K562 (cell line): ENCODE measurements at regions of chr2 and their contacts with region 1.

Region 1: GRCh38 chr2:206392118-206392517 is 51.2 kb upstream of the ADAM23 start:
- DNase-seq: peak; percentile 21 to 53 (median 24)
- ATAC-seq: peak; percentile 78
- H3K4me3 ChIP-seq: no peak overlapping the region
- H3K27ac ChIP-seq: no peak overlapping the region
- H3K4me1 ChIP-seq: no peaks in the 10 kb centered on the region
- H3K27me3 ChIP-seq: no peaks in the 10 kb centered on the region
- CTCF ChIP-seq: peak; percentile 45 to 63 (median 51); a peak in 5 of 6 replicates
- EP300 ChIP-seq: no peak
- POLR2A ChIP-seq: no peak
- RAD21 ChIP-seq: peak in 1 of 2 experiments; percentile 56; a peak in 2 of 4 replicates

Region 2: GRCh38 chr2:206260188-206261012 is 131.7 kb before region 1 on chr2:
- CTCF ChIA-PET with region 1: no interaction called
- POLR2A ChIA-PET with region 1: no interaction called
- in situ Hi-C with region 1: no loop called
- intact Hi-C with region 1: no loop called
- DNase-seq: peak in 3 of 4 experiments; percentile 6 to 14 (median 9)
- ATAC-seq: peak; percentile 84
- H3K4me3 ChIP-seq: no peak overlapping the region
- H3K27ac ChIP-seq: no peak overlapping the region
- H3K4me1 ChIP-seq: no peaks in the 10 kb centered on the region
- H3K27me3 ChIP-seq: peaks cover 12 to 42% of the 10 kb centered on the region in 2 experiments; a peak in 4 of 5 replicates
- CTCF ChIP-seq: peak; percentile 8 to 34 (median 18); a peak in 3 of 6 replicates
- EP300 ChIP-seq: no peak
- POLR2A ChIP-seq: no peak
- RAD21 ChIP-seq: peak; percentile 10 to 33; a peak in 1 of 4 replicates

Region 3: DNA sequence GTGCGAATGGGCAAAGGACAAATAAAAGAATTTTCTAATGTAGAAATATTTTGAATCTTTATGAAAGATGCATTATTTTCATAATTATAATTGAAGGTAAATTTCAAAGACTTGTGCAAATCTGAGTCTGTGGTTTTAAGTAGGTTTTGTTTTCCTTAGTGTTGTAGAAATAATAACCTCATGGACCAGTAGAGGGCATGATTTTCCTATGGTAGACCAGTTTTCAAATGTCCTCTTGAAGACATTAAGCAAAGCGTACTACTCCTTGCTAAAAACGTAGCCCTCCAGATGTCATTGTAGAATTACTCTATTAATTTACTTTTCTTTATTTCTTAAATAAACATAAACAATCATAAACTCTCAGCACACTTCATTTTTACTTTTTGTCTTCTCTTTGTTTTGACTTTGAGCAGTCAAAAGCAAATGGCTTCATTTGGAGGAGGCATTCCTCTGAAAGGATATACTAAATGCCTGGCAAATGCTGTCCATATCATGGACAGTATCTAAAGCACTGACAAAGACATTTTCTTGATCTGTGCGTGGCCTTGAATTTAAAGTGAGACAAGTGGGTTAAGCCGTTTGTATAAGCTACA is 164.3 kb after region 1 on chr2:
- CTCF ChIA-PET with region 1: no interaction called
- POLR2A ChIA-PET with region 1: no interaction called
- in situ Hi-C with region 1: no loop called
- intact Hi-C with region 1: loop called (anchors 5 kb)
- DNase-seq: peak; percentile 12 to 33 (median 18)
- ATAC-seq: peak; percentile 71
- H3K4me3 ChIP-seq: no peak overlapping the region
- H3K27ac ChIP-seq: no peak overlapping the region
- H3K4me1 ChIP-seq: no peaks in the 10 kb centered on the region
- H3K27me3 ChIP-seq: no peaks in the 10 kb centered on the region
- CTCF ChIP-seq: peak; percentile 29 to 59 (median 31); a peak in 3 of 6 replicates
- EP300 ChIP-seq: no peak
- POLR2A ChIP-seq: no peak
- RAD21 ChIP-seq: peak in 1 of 2 experiments; percentile 50; a peak in 3 of 4 replicates

Region 4: GRCh38 chr2:206693399-206694137 is 301.4 kb after region 1 on chr2:
- CTCF ChIA-PET with region 1: no interaction called
- POLR2A ChIA-PET with region 1: no interaction called
- in situ Hi-C with region 1: no loop called
- intact Hi-C with region 1: loop called (anchors 10 kb)
- DNase-seq: peak; percentile 25 to 59 (median 30)
- ATAC-seq: peak; percentile 81
- H3K4me3 ChIP-seq: no peak overlapping the region
- H3K27ac ChIP-seq: no peak overlapping the region
- H3K4me1 ChIP-seq: no peaks in the 10 kb centered on the region
- H3K27me3 ChIP-seq: no peaks in the 10 kb centered on the region; a peak in 1 of 5 replicates
- CTCF ChIP-seq: peak; percentile 37 to 60 (median 51); a peak in 5 of 6 replicates
- EP300 ChIP-seq: no peak
- POLR2A ChIP-seq: no peak
- RAD21 ChIP-seq: peak; percentile 63 to 69